H1 (cell line): ENCODE measurements at regions of chr15 and their contacts with region 1.

Region 1: GRCh38 chr15:40914486-40914885 is 14.7 kb upstream of the DLL4 start:
- DNase-seq: no peak
- H3K4me3 ChIP-seq: no peak overlapping the region
- H3K27ac ChIP-seq: no peak overlapping the region
- H3K4me1 ChIP-seq: peaks cover 0 to 34% (median 11%) of the 10 kb centered on the region in 4 experiments; a peak in 4 of 7 replicates
- H3K27me3 ChIP-seq: peaks cover 0 to 16% (median 1%) of the 10 kb centered on the region in 4 experiments; a peak in 4 of 7 replicates
- CTCF ChIP-seq: peak in 2 of 3 experiments; percentile 55 to 77; a peak in 3 of 4 replicates
- EP300 ChIP-seq: no peak
- POLR2A ChIP-seq: no peak
- RAD21 ChIP-seq: peak; percentile 63 to 66

Region 2: DNA sequence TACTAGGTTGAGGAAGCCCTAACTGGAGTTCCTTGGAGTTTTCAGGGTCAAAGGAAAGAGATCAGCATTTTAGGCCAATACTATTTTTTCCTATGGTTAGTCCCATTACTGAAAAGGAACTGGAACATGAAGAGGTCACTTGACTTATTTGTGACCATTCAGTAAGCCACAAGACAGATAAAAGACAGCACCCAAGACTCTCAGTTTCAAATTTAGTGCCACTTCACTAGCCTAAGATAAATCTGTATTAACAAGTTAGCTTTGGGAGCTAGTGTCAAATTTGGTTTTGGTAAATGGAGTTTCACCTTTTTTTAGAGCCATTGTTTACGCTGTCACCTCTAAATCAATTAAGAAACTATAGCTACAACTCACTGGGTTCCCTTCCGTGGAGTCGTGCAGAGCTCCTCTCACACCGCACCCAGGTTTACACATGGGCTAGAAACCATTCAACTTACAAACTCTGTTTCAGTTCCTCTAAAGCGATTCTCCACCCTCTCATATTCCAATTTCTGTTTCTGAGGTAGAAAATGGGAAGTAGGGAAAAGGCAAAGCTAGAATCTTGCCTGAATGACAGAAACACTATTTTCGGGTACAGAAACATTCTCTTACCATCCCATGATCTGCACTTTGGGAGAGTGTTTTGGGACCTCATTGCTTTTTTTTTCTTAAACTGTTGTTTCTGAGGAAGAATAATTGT is 364.0 kb before region 1 on chr15:
- CTCF ChIA-PET with region 1: no interaction called
- POLR2A ChIA-PET with region 1: no interaction called
- DNase-seq: no peak
- H3K4me3 ChIP-seq: no peak overlapping the region
- H3K27ac ChIP-seq: no peak overlapping the region
- H3K4me1 ChIP-seq: peaks cover 12 to 23% (median 13%) of the 10 kb centered on the region in 4 experiments
- H3K27me3 ChIP-seq: no peaks in the 10 kb centered on the region
- CTCF ChIP-seq: no peak
- EP300 ChIP-seq: no peak
- POLR2A ChIP-seq: no peak
- RAD21 ChIP-seq: no peak

Region 3: DNA sequence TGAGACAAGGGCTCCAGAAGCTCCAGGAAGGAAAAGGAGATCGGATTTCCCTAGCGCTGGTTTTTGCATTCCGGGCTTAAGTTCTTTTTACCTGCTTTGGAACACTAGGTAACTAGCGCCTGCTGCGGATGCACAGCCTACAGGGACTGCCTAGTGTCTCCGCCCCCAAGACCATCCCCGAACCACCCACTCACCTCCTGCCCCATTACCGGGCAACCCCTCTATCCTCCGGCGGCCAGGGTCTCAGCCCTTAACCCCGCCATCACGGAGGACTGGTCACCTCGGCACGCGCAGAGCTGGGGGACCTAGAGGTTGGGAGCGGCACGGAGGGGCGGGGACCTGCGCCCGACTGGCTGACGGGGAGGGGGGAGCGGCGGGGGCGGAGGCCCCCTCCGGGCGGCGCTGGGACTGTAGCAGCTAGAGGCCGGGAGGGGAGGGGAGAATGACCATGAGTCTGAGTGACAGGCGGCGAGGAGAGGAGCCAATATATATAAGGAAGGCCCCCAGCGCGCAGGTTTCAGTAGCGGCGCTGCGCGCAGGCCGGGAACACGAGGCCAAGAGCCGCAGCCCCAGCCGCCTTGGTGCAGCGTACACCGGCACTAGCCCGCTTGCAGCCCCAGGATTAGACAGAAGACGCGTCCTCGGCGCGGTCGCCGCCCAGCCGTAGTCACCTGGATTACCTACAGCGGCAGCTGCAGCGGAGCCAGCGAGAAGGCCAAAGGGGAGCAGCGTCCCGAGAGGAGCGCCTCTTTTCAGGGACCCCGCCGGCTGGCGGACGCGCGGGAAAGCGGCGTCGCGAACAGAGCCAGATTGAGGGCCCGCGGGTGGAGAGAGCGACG is 14.6 kb after region 1 on chr15 and contains the start of gene DLL4:
- CTCF ChIA-PET with region 1: interaction called, 619 read pairs
- POLR2A ChIA-PET with region 1: interaction called, 105 read pairs
- DNase-seq: peak in 1 of 2 experiments; percentile 87
- H3K4me3 ChIP-seq: peak within 1 kb of the TSS; percentile 31 to 71 (median 46)
- H3K27ac ChIP-seq: no peak within 1 kb of the TSS
- H3K4me1 ChIP-seq: peaks cover 3 to 36% (median 21%) of the 10 kb centered on the region in 4 experiments
- H3K27me3 ChIP-seq: peaks cover 69 to 94% (median 90%) of the 10 kb centered on the region in 4 experiments
- CTCF ChIP-seq: no peak
- EP300 ChIP-seq: no peak
- POLR2A ChIP-seq: peak in 1 of 2 experiments; percentile 69; a peak in 2 of 3 replicates
- RAD21 ChIP-seq: no peak
- total RNA-seq, gene DLL4: 0.48 and 0.60 TPM in 2 replicates

Region 4: DNA sequence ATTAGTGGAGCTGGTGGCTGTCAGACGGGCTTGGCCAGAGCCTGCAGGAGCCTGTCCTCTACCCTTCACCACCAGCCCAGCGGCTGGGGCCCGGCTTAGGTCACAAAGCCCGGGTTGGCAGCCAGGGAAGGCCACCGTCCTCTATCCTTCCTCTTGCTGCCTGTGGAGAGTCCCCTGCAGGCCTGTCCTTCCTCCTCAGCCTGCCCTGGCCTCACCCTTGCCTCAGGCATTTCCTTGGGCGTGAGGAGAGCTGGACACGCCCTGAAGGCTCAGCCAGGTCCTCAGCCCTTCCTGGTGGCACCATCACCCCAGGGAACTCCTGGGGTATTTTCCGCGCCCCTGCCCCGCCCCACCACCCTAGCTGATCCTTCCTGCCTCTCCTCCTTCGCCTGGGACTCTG is 46.4 kb after region 1 on chr15:
- CTCF ChIA-PET with region 1: interaction called, 13 read pairs
- POLR2A ChIA-PET with region 1: interaction called, 1,505 read pairs
- DNase-seq: no peak
- H3K4me3 ChIP-seq: no peak overlapping the region
- H3K27ac ChIP-seq: no peak overlapping the region
- H3K4me1 ChIP-seq: no peaks in the 10 kb centered on the region; a peak in 5 of 7 replicates
- H3K27me3 ChIP-seq: no peaks in the 10 kb centered on the region
- CTCF ChIP-seq: no peak
- EP300 ChIP-seq: no peak
- POLR2A ChIP-seq: no peak
- RAD21 ChIP-seq: no peak

Region 5: GRCh38 chr15:41022487-41023090 is 108.1 kb after region 1 on chr15:
- CTCF ChIA-PET with region 1: interaction called, 257 read pairs
- POLR2A ChIA-PET with region 1: no interaction called
- DNase-seq: peak in 1 of 2 experiments; percentile 58
- H3K4me3 ChIP-seq: no peak overlapping the region
- H3K27ac ChIP-seq: no peak overlapping the region
- H3K4me1 ChIP-seq: no peaks in the 10 kb centered on the region
- H3K27me3 ChIP-seq: no peaks in the 10 kb centered on the region
- CTCF ChIP-seq: peak; percentile 54 to 82 (median 82)
- EP300 ChIP-seq: no peak
- POLR2A ChIP-seq: no peak
- RAD21 ChIP-seq: peak; percentile 88